ENCODE measurements at regions of chr22 and their contacts with region 1.

Region 1: DNA sequence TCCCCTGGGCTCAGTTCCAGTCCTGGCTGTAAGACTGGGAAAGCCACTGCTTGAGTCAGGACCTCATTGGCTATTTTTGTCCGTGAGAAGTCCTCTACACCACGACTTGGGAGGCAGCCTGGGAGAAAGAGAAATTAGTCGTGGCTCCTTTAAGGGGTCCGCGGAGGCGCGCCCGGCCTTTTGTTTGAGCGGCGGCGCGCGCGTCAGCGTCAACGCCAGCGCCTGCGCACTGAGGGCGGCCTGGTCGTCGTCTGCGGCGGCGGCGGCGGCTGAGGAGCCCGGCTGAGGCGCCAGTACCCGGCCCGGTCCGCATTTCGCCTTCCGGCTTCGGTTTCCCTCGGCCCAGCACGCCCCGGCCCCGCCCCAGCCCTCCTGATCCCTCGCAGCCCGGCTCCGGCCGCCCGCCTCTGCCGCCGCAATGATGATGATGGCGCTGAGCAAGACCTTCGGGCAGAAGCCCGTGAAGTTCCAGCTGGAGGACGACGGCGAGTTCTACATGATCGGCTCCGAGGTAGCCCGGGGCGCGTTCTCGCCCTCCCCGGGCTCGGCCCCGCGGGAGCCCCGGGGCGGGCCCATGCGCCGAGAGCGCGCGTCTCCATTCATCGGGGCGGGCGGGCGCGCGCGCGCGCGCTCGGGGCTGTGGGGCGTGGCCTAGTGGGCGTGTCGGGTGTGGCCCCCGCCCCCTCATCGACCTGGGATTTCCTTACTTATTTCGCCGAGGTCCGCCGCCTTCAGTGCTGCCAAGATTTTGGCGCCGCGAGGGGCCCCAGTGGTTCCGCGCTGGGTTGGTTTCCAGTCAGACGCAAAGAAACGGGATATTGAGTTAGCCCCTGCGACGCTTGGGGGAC is at the start of gene SMARCB1:
- DNase-seq: peak; percentile 90 to 95
- ATAC-seq: peak; percentile 89 to 96 (median 90)
- H3K4me3 ChIP-seq: peak within 1 kb of the TSS; percentile 75
- H3K4me3 Mint-ChIP-seq: peak within 1 kb of the TSS; percentile 85
- H3K27ac ChIP-seq: peak within 1 kb of the TSS; percentile 98
- H3K27ac Mint-ChIP-seq: peak within 1 kb of the TSS; percentile 84 to 89
- H3K4me1 ChIP-seq: peaks cover 36% of the 10 kb centered on the region
- H3K4me1 Mint-ChIP-seq: peaks cover 29 to 31% of the 10 kb centered on the region in 2 donors
- H3K27me3 ChIP-seq: no peaks in the 10 kb centered on the region
- H3K27me3 Mint-ChIP-seq: no peaks in the 10 kb centered on the region
- CTCF ChIP-seq: no peak
- total RNA-seq, gene SMARCB1: 56.3 to 76.9 (median 69.8) TPM

Region 2: DNA sequence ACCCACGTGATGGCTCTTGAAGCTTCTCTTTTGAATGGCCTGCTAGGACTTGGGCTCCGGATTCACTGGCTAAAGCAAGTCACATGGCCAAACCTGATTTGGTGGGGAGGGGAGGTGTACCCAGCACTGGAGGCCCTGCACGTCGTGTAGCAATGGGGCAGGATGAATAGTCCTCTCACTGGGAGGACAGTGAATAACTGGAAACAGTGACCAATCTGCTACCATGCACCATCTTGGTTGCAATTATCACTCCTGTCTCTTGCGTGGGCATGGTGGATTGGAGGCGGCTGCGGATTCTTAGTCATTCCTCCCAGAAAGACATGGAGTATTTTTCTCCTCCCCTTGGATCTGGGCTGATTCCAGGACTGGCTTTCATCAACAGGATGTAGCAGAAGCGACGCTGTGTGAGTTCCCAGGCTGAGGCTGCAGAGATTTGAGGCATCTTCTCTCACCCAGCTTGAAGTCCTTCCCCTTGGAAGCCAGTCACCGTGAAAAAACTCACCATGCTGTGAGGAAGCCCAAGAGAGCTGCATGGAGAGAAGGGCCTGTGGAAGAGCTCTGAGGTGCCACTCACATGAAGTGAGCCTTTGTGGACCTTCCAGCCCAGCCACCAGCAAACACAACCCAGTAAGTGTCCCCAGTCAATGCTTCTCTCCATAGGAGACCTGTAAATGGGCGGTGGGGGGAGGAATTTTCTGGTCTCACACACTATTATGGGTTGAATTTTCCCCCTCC is 277.2 kb before region 1 on chr22:
- intact Hi-C with region 1: no loop called
- DNase-seq: no peak
- ATAC-seq: no peak
- H3K4me3 ChIP-seq: no peak overlapping the region
- H3K4me3 Mint-ChIP-seq: no peak overlapping the region
- H3K27ac ChIP-seq: no peak overlapping the region
- H3K27ac Mint-ChIP-seq: no peak overlapping the region
- H3K4me1 ChIP-seq: no peaks in the 10 kb centered on the region
- H3K4me1 Mint-ChIP-seq: no peaks in the 10 kb centered on the region
- H3K27me3 ChIP-seq: no peaks in the 10 kb centered on the region
- H3K27me3 Mint-ChIP-seq: no peaks in the 10 kb centered on the region
- CTCF ChIP-seq: no peak

Region 3: DNA sequence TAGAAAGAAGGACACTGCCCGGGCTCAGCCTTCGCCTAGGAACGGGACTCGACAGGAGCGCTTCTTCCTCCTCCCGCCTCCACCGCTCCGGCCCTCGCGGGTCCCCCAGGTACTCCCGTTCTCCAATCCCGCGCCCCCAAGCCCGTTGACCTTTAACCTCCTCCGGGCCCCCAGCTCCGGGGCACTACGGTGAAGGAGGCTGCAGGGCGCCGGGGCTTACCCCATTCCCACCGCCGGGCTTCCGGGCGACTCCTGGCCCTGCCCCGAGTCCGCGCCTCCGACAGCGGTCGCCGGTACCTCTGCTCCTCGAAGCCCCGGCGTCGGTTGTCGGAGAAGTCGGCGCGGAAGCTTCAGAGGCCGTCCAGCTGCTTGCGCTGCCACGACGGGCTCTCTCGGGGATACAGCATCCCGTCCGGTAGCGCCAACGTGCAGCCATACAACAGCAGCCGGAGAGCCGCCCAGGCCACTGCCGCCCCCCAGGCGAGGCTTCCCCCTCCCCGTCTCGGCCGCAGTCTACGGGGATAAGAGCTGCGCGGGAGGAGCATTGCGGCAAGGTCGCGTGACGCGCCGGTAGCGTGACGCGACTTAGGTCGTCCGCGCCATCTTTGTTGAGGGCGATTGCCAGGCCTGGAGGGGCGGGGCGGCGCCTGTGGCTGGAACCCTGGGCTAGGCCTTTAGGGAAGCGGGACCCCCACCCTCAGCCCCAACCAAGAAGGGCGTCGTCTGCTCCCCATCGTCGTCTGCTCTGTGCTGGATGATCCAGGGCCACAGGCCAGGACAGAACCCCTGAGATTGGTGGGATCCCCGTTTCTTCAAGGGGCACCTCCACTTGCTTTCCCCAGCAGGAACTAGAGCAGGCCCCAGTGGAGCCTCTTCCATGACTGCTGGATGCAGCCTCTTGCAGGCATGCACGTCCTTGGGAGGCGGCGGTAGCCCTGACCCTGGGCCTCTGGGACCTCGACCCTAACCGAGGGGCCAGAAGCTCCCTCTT is 69.9 kb before region 1 on chr22:
- intact Hi-C with region 1: no loop called
- DNase-seq: peak; percentile 77 to 91
- ATAC-seq: peak; percentile 94 to 96 (median 95)
- H3K4me3 ChIP-seq: peak overlapping the region; percentile 79
- H3K4me3 Mint-ChIP-seq: peak overlapping the region; percentile 82
- H3K27ac ChIP-seq: peak overlapping the region; percentile 68
- H3K27ac Mint-ChIP-seq: peak overlapping the region; percentile 75 to 88
- H3K4me1 ChIP-seq: peaks cover 25% of the 10 kb centered on the region
- H3K4me1 Mint-ChIP-seq: peaks cover 16 to 26% of the 10 kb centered on the region in 2 donors
- H3K27me3 ChIP-seq: no peaks in the 10 kb centered on the region
- H3K27me3 Mint-ChIP-seq: no peaks in the 10 kb centered on the region
- CTCF ChIP-seq: no peak

Region 4: DNA sequence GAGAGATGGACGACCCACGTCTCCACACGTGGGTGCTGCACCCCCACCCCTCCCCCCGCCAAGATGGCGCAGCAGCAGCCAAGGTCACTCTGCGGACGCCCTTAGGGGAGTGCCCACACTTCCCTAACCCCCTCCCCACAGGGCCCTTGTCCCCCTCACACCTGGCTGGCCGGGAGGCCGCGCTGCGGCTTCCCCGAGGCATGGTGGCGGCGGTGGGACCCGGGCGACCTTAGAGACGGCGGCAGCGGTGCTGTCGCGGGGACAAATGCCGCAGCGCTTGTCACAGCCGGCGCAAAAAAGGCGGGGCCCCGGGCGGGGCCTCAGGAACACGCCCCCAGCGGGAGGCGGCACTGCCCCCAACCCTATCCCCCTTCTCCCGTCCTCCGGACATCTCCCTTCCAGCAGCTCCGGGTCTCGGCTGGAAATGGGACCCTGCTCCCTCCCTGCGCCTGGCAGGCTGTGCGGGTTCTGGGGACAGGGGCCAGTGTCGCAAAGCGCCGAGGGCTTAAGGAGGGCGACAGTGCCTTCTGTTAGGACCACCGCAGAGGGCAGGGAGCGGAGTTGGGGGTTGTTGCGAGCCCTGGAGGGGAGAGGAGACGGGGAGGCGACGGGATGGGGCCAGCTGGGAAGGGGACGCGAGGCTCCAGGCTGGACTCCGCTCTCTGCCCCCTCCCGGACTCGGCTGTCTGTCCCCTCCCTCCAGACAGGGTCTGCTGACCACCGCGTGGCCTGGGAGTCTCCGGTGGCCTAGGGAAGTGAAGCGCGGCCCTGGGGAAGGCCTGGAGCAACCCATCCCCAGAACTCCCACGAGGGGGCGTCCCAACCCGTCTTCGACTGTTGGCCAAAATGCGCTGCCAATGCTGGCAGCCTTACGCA is 19.1 kb before region 1 on chr22 and contains the start of gene CHCHD10:
- intact Hi-C with region 1: loop called (anchors 2 kb)
- DNase-seq: peak; percentile 73 to 83
- ATAC-seq: peak; percentile 70 to 82 (median 72)
- H3K4me3 ChIP-seq: peak within 1 kb of the TSS; percentile 57
- H3K4me3 Mint-ChIP-seq: peak within 1 kb of the TSS; percentile 78
- H3K27ac ChIP-seq: peak within 1 kb of the TSS; percentile 49
- H3K27ac Mint-ChIP-seq: peak within 1 kb of the TSS in 1 of 2 donors; percentile 72
- H3K4me1 ChIP-seq: peaks cover 77% of the 10 kb centered on the region
- H3K4me1 Mint-ChIP-seq: peaks cover 16 to 42% of the 10 kb centered on the region in 2 donors
- H3K27me3 ChIP-seq: no peaks in the 10 kb centered on the region
- H3K27me3 Mint-ChIP-seq: no peaks in the 10 kb centered on the region
- CTCF ChIP-seq: peak; percentile 65
- total RNA-seq, gene CHCHD10: 9.3 to 22.5 (median 13.8) TPM

Region 5: GRCh38 chr22:23838681-23839468 is 51.9 kb after region 1 on chr22 and contains the start of gene DERL3:
- intact Hi-C with region 1: loop called (anchors 1 kb)
- DNase-seq: peak; percentile 91 to 96
- ATAC-seq: peak; percentile 88 to 93 (median 88)
- H3K4me3 ChIP-seq: peak within 1 kb of the TSS; percentile 73
- H3K4me3 Mint-ChIP-seq: peak within 1 kb of the TSS; percentile 93
- H3K27ac ChIP-seq: peak within 1 kb of the TSS; percentile 81
- H3K27ac Mint-ChIP-seq: peak within 1 kb of the TSS; percentile 85 to 91
- H3K4me1 ChIP-seq: peaks cover 36% of the 10 kb centered on the region
- H3K4me1 Mint-ChIP-seq: peaks cover 22 to 24% of the 10 kb centered on the region in 2 donors
- H3K27me3 ChIP-seq: no peaks in the 10 kb centered on the region
- H3K27me3 Mint-ChIP-seq: no peaks in the 10 kb centered on the region
- CTCF ChIP-seq: no peak
- total RNA-seq, gene DERL3: 0.88 to 24.5 (median 1.3) TPM

Region 6: DNA sequence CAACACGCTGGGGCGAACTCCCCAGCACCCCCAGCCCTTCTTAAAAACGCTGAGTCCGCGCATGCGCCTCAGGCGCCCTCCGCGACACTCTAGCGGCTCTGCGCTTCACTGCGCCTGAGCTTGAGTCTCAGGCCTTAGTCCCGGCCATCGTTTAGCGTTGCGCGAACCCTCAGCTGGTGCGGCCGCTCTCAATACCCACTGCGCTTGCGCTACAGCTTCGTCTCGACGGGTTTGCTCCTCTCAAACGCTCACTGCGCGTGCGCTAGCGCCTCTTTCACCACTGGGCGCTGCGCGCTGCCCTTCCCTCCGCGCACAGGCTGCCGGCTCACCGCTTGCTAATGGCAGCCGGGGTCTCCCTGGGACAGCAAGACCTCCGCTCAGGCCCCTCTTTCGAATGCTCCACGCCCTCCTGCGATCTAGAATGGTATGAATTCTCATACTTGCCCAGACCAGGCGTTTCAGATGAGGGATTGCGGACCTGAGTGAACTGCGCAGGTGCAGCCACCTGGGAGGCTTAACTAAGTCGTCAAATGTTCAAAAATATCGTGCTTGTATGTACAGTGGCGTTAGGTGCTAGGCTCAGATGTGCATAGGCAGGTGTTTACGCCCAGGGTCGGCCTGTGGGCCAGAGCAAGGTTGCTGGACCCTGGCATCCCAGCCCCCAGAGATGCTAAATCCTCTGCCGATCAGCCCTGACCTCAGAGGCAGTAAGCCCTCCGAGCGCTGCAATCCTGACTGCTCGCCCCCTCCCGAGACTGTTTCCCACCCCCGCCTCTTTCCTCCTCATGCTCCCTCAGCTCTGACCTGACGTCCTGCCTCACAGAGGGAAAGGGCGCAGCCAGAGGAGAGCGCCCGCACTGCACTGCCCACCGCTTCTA is 70.9 kb after region 1 on chr22 and contains the start of gene SLC2A11:
- intact Hi-C with region 1: no loop called
- DNase-seq: peak; percentile 89 to 98
- ATAC-seq: peak; percentile 94 to 98 (median 96)
- H3K4me3 ChIP-seq: peak within 1 kb of the TSS; percentile 77
- H3K4me3 Mint-ChIP-seq: peak within 1 kb of the TSS; percentile 94
- H3K27ac ChIP-seq: peak within 1 kb of the TSS; percentile 84
- H3K27ac Mint-ChIP-seq: peak within 1 kb of the TSS; percentile 87 to 93
- H3K4me1 ChIP-seq: peaks cover 22% of the 10 kb centered on the region
- H3K4me1 Mint-ChIP-seq: peaks cover 21 to 23% of the 10 kb centered on the region in 2 donors
- H3K27me3 ChIP-seq: no peaks in the 10 kb centered on the region
- H3K27me3 Mint-ChIP-seq: no peaks in the 10 kb centered on the region
- CTCF ChIP-seq: no peak
- total RNA-seq, gene SLC2A11: 9.2 to 14.1 (median 11.8) TPM

Region 7: DNA sequence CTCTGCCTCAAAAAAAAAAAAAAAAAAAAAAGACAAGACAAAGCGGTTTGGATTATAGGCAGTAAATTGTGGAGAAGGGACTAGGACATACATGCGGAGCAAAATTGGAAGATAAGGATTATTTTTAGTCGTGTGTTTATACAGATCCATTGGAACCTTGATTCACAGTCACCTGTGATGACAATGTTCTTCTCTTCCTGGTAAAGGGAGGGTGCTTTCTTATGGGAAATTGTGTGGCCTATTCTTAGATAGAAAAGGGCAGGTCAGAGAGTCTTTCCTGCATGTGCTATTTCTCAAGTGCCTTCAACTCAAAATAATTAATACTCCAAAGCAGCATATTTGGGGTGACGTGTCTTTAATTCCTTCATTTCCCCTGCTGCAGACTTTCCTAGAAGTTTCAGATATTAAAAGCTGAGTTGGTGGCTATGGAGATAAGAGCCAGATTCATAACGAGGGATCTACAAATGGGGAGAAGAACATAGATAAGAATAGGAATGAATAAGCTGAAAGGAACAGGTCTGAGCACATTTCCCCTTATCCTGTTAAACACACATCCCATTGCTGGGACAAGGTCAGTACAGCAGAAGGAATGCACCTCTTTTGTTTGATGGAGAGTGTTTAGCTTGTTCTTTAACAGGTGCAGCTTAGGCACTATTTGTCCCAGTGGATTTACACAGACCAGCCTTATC is 151.5 kb after region 1 on chr22:
- intact Hi-C with region 1: no loop called
- DNase-seq: peak in 1 of 2 donors; percentile 0
- ATAC-seq: peak in 1 of 3 donors; percentile 38
- H3K4me3 ChIP-seq: no peak overlapping the region
- H3K4me3 Mint-ChIP-seq: no peak overlapping the region
- H3K27ac ChIP-seq: no peak overlapping the region
- H3K27ac Mint-ChIP-seq: no peak overlapping the region
- H3K4me1 ChIP-seq: no peaks in the 10 kb centered on the region
- H3K4me1 Mint-ChIP-seq: no peaks in the 10 kb centered on the region
- H3K27me3 ChIP-seq: no peaks in the 10 kb centered on the region
- H3K27me3 Mint-ChIP-seq: no peaks in the 10 kb centered on the region
- CTCF ChIP-seq: no peak

Region 8: DNA sequence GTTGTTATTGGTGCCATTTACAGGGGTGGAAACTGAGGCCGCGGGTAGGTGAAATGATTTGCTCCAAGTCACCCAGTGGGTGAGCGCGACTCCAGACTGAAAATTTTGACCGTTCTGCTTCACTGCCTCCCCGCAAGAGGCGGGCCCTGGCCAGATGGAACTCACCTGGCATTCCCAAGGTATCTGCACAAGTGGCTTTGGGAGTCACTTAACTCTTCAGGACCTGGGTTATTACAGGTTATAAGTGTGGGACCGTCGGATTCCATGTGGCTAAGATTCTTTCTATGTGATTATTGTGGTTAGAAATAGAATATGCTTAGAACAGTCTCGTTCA is 224.7 kb after region 1 on chr22:
- intact Hi-C with region 1: loop called (anchors 2 kb)
- DNase-seq: no peak
- ATAC-seq: no peak
- H3K4me3 ChIP-seq: peak overlapping the region; percentile 99
- H3K4me3 Mint-ChIP-seq: peak overlapping the region; percentile 97
- H3K27ac ChIP-seq: peak overlapping the region; percentile 91
- H3K27ac Mint-ChIP-seq: peak overlapping the region; percentile 93 to 95
- H3K4me1 ChIP-seq: peaks cover 13% of the 10 kb centered on the region
- H3K4me1 Mint-ChIP-seq: peaks cover 27 to 28% of the 10 kb centered on the region in 2 donors
- H3K27me3 ChIP-seq: no peaks in the 10 kb centered on the region
- H3K27me3 Mint-ChIP-seq: no peaks in the 10 kb centered on the region
- CTCF ChIP-seq: no peak